ENCODE measurements at regions of chr1 and their contacts with region 1.

Region 1: DNA sequence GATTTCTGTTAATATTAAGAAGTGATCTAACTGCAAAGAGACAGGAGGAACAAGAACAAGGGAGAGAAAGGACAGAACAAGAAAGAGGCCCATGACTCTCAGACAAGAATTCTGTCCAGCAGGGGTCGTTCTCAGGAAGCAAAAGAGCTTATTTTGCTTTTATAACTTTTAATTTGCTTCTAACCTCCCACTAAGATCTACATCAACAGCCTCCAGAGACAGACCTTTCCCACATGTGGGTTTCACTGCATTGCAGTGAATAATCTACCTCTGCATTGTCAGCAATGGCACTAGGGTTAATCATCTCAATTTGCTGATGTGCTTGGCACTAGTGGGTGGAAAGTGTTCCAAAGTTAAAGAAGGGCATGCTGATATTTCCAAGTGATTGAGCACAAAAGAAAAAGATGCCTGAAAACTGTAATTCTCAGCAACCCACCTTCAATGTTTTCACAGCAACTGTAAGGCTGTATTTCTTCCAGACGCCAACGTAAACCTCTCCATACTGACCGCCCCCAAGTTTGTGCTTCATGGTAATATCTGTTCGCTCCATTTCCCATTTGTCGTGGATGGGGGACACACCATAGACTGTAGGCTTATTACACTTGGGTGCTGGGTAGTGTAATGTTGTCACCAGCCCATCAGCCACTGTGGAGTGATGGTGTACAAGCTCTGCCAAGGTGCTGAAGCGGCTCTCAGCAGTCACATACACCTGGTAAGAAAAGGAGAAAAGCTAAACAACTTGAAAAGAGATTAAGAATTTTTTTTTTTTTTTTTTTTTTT is 39.5 kb downstream of the TOR3A start:
- DNase-seq: peak; percentile 38 to 47 (median 45)
- H3K4me3 ChIP-seq: no peak overlapping the region
- H3K4me3 Mint-ChIP-seq: peak overlapping the region in 1 of 8 donors; percentile 48
- H3K27ac ChIP-seq: no peak overlapping the region
- H3K27ac Mint-ChIP-seq: peak overlapping the region in 1 of 7 donors; percentile 30
- H3K4me1 ChIP-seq: no peaks in the 10 kb centered on the region
- H3K4me1 Mint-ChIP-seq: peaks cover 0 to 7% (median 0%) of the 10 kb centered on the region in 4 donors
- H3K27me3 ChIP-seq: no peaks in the 10 kb centered on the region
- H3K27me3 Mint-ChIP-seq: no peaks in the 10 kb centered on the region

Region 2: GRCh38 chr1:179107706-179108629 is 13.4 kb before region 1 on chr1:
- CTCF ChIA-PET with region 1: interaction called, 12 read pairs
- POLR2A ChIA-PET with region 1: no interaction called
- intact Hi-C with region 1: no loop called
- DNase-seq: no peak
- H3K4me3 ChIP-seq: no peak overlapping the region
- H3K4me3 Mint-ChIP-seq: no peak overlapping the region
- H3K27ac ChIP-seq: no peak overlapping the region
- H3K27ac Mint-ChIP-seq: no peak overlapping the region
- H3K4me1 ChIP-seq: no peaks in the 10 kb centered on the region
- H3K4me1 Mint-ChIP-seq: no peaks in the 10 kb centered on the region
- H3K27me3 ChIP-seq: no peaks in the 10 kb centered on the region
- H3K27me3 Mint-ChIP-seq: no peaks in the 10 kb centered on the region

Region 3: GRCh38 chr1:179190861-179191260 is 69.5 kb after region 1 on chr1:
- CTCF ChIA-PET with region 1: interaction called, 5 read pairs
- POLR2A ChIA-PET with region 1: no interaction called
- intact Hi-C with region 1: loop called (anchors 1 kb)
- DNase-seq: no peak
- H3K4me3 ChIP-seq: no peak overlapping the region
- H3K4me3 Mint-ChIP-seq: peak overlapping the region in 2 of 8 donors; percentile 30 to 34
- H3K27ac ChIP-seq: no peak overlapping the region
- H3K27ac Mint-ChIP-seq: no peak overlapping the region
- H3K4me1 ChIP-seq: peaks cover 9% of the 10 kb centered on the region
- H3K4me1 Mint-ChIP-seq: peaks cover 13 to 23% (median 16%) of the 10 kb centered on the region in 4 donors
- H3K27me3 ChIP-seq: no peaks in the 10 kb centered on the region
- H3K27me3 Mint-ChIP-seq: no peaks in the 10 kb centered on the region

Region 4: GRCh38 chr1:179205284-179205683 is 83.9 kb after region 1 on chr1:
- CTCF ChIA-PET with region 1: no interaction called
- POLR2A ChIA-PET with region 1: no interaction called
- intact Hi-C with region 1: no loop called
- DNase-seq: no peak
- H3K4me3 ChIP-seq: no peak overlapping the region
- H3K4me3 Mint-ChIP-seq: no peak overlapping the region
- H3K27ac ChIP-seq: no peak overlapping the region
- H3K27ac Mint-ChIP-seq: peak overlapping the region in 4 of 7 donors; percentile 0 to 48 (median 26)
- H3K4me1 ChIP-seq: no peaks in the 10 kb centered on the region
- H3K4me1 Mint-ChIP-seq: peaks cover 17 to 45% (median 29%) of the 10 kb centered on the region in 4 donors
- H3K27me3 ChIP-seq: no peaks in the 10 kb centered on the region
- H3K27me3 Mint-ChIP-seq: no peaks in the 10 kb centered on the region

Region 5: GRCh38 chr1:179293340-179294327 is 172.3 kb after region 1 on chr1 and contains the start of gene SOAT1:
- CTCF ChIA-PET with region 1: interaction called, 31 read pairs
- POLR2A ChIA-PET with region 1: interaction called, 4 read pairs
- intact Hi-C with region 1: no loop called
- DNase-seq: peak; percentile 89 to 92 (median 90)
- H3K4me3 ChIP-seq: peak within 1 kb of the TSS; percentile 82 to 93
- H3K4me3 Mint-ChIP-seq: peak within 1 kb of the TSS; percentile 91 to 99 (median 96)
- H3K27ac ChIP-seq: peak within 1 kb of the TSS; percentile 86
- H3K27ac Mint-ChIP-seq: peak within 1 kb of the TSS; percentile 81 to 98 (median 95)
- H3K4me1 ChIP-seq: peaks cover 46% of the 10 kb centered on the region
- H3K4me1 Mint-ChIP-seq: peaks cover 25 to 47% (median 31%) of the 10 kb centered on the region in 4 donors
- H3K27me3 ChIP-seq: no peaks in the 10 kb centered on the region
- H3K27me3 Mint-ChIP-seq: no peaks in the 10 kb centered on the region
- total RNA-seq, gene SOAT1: 51.2 to 51.6 TPM

Measured in CD4-positive, alpha-beta memory T cell (primary cell).